ENCODE measurements at regions of chr21 and their contacts with region 1.

Region 1: DNA sequence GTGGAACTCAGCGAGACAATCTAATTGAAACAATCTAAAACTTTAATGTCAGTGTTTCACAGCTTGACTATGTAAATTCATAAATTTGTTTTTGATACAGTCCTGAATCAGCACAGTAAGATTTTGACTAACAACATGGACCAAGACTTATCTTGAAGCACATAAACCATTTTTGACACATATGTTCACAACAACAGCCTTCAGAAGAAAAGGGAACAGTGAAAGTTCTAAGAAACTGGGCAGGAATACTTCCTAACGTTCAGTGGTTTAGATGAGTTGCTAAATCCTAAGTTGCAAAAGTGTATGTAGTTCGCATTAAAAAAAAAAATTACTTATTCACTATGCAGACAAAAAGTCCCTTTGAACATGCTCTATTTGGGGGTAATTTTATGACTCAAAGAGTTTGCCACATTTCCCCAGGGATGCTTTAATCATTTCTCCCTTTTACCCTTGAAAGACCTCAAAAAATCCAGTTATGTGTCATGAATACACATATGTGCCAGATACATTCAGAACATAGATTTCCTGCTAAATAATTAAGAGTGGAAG is 120.2 kb downstream of the MRPL39 start:
- DNase-seq: no peak
- H3K4me3 Mint-ChIP-seq: peak overlapping the region; percentile 58
- H3K27ac Mint-ChIP-seq: peak overlapping the region; percentile 87
- H3K4me1 Mint-ChIP-seq: peaks cover 76% of the 10 kb centered on the region
- H3K27me3 Mint-ChIP-seq: no peaks in the 10 kb centered on the region

Region 2: GRCh38 chr21:25421327-25422028 is 65.6 kb before region 1 on chr21:
- CTCF ChIA-PET with region 1: interaction called, 5 read pairs
- POLR2A ChIA-PET with region 1: interaction called, 10 read pairs
- intact Hi-C with region 1: loop called (anchors 1 kb)
- DNase-seq: peak; percentile 79
- H3K4me3 Mint-ChIP-seq: peak overlapping the region; percentile 67
- H3K27ac Mint-ChIP-seq: peak overlapping the region; percentile 89
- H3K4me1 Mint-ChIP-seq: peaks cover 62% of the 10 kb centered on the region
- H3K27me3 Mint-ChIP-seq: no peaks in the 10 kb centered on the region

Region 3: DNA sequence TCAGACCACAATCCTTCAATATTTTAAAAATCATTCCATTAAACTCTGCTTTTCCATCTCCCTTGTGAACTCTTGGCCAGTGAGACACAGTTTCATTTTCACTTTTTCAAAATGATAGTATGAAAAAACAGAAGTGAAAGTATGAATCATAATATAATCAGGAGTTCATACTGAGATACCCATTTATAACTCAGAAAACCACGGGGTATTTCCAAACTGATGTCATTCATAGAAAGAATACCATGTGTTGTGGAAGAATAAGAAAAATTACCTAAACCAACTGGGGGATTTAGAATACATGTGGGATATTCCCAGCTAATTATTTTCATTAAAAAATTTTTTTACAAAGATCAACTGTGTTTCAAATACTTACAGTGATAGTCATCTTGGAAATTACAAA is 29.7 kb before region 1 on chr21:
- CTCF ChIA-PET with region 1: interaction called, 3 read pairs
- POLR2A ChIA-PET with region 1: interaction called, 18 read pairs
- intact Hi-C with region 1: loop called (anchors 1 kb)
- DNase-seq: no peak
- H3K4me3 Mint-ChIP-seq: peak overlapping the region; percentile 68
- H3K27ac Mint-ChIP-seq: peak overlapping the region; percentile 93
- H3K4me1 Mint-ChIP-seq: peaks cover 77% of the 10 kb centered on the region
- H3K27me3 Mint-ChIP-seq: no peaks in the 10 kb centered on the region

Region 4: GRCh38 chr21:25501996-25502665 is 15.0 kb after region 1 on chr21:
- CTCF ChIA-PET with region 1: interaction called, 10 read pairs
- POLR2A ChIA-PET with region 1: interaction called, 30 read pairs
- intact Hi-C with region 1: loop called (anchors 1 kb)
- DNase-seq: peak; percentile 84
- H3K4me3 Mint-ChIP-seq: peak overlapping the region; percentile 39
- H3K27ac Mint-ChIP-seq: peak overlapping the region; percentile 87
- H3K4me1 Mint-ChIP-seq: peaks cover 57% of the 10 kb centered on the region
- H3K27me3 Mint-ChIP-seq: no peaks in the 10 kb centered on the region

Region 5: DNA sequence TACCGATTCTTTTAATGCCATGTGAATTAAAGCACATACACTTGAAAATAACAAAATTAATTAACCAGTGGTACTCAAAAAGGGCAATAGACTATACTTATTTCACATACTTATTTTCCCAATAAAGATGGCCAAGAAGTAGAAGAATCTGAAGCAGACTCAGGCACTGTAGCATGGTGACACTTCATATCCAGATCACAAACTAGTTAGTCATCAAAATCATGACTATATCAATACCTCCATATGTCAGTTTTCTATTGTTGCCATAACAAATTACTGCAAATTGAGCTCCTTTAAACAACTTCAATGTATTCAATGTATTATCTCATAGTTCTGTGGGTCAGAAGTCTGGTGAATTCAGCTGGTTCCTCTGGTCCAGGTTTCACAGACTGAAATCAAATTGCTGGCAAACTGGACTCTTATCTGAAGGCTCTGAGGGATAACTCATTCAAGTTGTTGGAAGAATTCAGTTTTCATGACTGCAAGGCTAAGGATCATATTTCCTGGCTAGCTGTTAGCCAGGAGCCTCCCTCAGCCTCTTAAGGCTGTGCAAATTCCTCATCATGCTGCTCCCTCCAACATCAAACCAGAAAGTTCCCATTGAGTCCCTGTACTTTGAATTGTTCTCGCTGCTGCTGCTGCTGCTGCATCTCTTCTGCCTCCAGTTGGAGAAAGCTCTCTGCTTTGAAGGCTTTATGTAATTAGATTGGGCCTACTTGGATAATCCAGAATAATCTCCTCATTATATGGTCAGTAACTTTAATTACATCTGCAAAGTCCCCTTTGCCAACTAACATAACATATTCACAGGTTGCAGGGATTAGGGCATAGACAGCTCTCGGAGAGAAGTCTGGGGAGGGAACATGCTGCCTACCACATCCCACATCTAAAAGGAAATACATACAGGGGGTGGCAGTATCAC is 28.6 kb after region 1 on chr21:
- CTCF ChIA-PET with region 1: interaction called, 3 read pairs
- POLR2A ChIA-PET with region 1: interaction called, 10 read pairs
- intact Hi-C with region 1: loop called (anchors 1 kb)
- DNase-seq: no peak
- H3K4me3 Mint-ChIP-seq: no peak overlapping the region
- H3K27ac Mint-ChIP-seq: no peak overlapping the region
- H3K4me1 Mint-ChIP-seq: peaks cover 45% of the 10 kb centered on the region
- H3K27me3 Mint-ChIP-seq: no peaks in the 10 kb centered on the region

Region 6: GRCh38 chr21:25568246-25568645 is 81.1 kb after region 1 on chr21:
- CTCF ChIA-PET with region 1: interaction called, 5 read pairs
- POLR2A ChIA-PET with region 1: interaction called, 81 read pairs
- intact Hi-C with region 1: loop called (anchors 1 kb)
- DNase-seq: no peak
- H3K4me3 Mint-ChIP-seq: peak overlapping the region; percentile 80
- H3K27ac Mint-ChIP-seq: peak overlapping the region; percentile 94
- H3K4me1 Mint-ChIP-seq: peaks cover 66% of the 10 kb centered on the region
- H3K27me3 Mint-ChIP-seq: no peaks in the 10 kb centered on the region

Region 7: GRCh38 chr21:25649146-25649545 is 162.0 kb after region 1 on chr21:
- CTCF ChIA-PET with region 1: no interaction called
- POLR2A ChIA-PET with region 1: no interaction called
- intact Hi-C with region 1: no loop called
- DNase-seq: no peak
- H3K4me3 Mint-ChIP-seq: no peak overlapping the region
- H3K27ac Mint-ChIP-seq: no peak overlapping the region
- H3K4me1 Mint-ChIP-seq: no peaks in the 10 kb centered on the region
- H3K27me3 Mint-ChIP-seq: peaks cover 2% of the 10 kb centered on the region